AG04449 (cell line): ENCODE measurements at regions of chr2 and their contacts with region 1.

Region 1: GRCh38 chr2:210195101-210195852 is 24.1 kb upstream of the KANSL1L start:
- DNase-seq: no peak
- H3K4me3 ChIP-seq: peak overlapping the region; percentile 16; the same call in 1 of the 2 replicates
- CTCF ChIP-seq: peak; percentile 39

Region 2: DNA sequence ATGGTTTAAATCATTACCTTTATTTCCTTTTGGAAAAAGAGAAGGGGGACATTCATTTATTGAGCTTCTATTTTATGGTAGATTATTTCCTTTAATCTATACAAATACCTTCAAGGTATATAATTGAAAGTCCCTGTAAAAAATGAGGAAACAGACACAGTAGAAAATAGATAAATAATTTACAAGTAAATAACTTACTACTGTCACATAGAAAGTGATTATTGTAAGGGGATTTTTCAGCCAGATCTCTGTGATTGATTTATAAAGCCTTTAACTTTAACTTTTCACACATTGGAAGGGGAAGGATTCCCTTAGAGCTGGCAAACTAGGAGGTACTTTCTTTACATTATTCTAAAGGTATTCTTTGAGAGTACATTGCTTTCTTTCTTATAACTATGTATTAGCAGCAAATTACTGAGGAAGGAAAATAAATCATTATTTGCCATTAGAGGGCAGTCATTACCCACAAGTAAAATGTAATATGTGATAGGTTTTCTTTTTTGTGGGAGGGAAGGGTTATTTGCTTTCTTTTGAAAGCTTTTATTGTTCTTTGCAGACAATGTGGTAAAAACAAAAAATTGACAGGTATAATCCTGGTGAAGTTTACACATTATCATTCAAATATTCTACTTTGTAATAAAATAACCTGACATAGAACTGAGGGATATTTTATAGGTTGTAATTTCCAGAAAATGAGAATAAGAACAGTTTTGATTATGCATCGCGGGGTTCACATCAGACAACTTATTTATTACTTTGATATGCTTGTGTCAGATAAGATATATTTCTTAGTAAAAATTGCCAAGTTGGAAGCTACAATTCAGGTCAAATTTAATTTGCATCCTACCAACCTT is 217.7 kb before region 1 on chr2:
- CTCF ChIA-PET with region 1: interaction called, 101 read pairs
- POLR2A ChIA-PET with region 1: no interaction called
- DNase-seq: no peak
- H3K4me3 ChIP-seq: no peak overlapping the region
- CTCF ChIP-seq: peak; percentile 5

Region 3: DNA sequence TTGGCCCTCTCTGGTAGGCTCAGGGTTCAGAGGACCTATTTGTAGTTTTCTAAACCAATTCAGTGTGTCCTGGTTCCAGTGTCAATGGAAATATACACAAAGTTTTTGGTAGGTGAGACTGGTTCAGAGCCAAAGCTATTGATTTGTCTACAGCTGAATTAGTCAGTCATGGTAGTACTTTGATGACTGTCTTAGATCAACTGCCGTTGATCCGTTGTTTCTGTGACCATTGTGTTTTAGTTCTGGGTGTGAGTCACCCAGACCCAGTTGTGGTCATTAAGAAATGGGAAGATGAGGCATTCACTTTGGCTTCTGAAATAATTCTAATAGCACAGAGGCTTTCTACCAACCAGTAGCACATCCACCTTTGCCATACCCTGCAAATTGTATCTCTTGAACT is 208.9 kb before region 1 on chr2:
- CTCF ChIA-PET with region 1: interaction called, 60 read pairs
- POLR2A ChIA-PET with region 1: no interaction called
- DNase-seq: no peak
- H3K4me3 ChIP-seq: no peak overlapping the region
- CTCF ChIP-seq: no peak

Region 4: GRCh38 chr2:210072922-210073509 is 122.3 kb before region 1 on chr2:
- CTCF ChIA-PET with region 1: interaction called, 20 read pairs
- POLR2A ChIA-PET with region 1: no interaction called
- DNase-seq: no peak
- H3K4me3 ChIP-seq: no peak overlapping the region
- CTCF ChIP-seq: peak; percentile 43